Naive thymus-derived CD8-positive, alpha-beta T cell (primary cell): ENCODE measurements at regions of chr17 and their contacts with region 1.

Region 1: DNA sequence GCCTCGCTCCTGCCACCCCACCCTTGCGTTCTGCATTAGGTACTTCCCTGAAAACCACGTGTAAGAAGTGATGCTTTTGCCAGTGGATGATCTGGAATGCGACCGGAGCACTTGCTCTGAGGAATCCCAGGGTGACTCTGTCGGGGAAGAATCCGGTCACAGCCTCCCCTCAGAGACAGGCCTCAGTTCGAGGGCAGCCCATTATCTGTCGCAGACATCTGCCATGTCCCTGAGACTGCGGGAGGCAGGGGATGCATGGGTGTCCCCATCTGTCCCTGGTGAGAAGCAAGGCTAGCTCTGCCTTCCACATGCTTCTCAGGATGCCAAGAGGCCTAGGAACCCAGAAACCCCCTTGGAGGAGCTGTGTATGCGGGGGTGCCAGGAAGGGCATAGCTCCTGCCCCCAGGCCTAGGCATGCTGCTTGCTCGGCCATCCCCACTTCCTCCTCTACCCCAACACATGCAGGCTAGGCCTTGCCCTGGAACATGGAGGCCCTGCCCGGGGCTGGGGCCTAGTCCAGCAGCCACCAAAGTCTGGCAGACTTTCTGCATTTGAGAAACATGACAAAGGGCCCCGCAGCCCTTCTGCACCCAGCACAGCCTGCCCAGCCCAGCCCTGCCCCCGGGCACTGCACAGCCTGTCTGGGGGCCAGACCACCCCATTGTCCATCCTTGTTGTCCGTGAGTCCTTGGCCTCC is 20.5 kb downstream of the MNT start:
- DNase-seq: no peak
- ATAC-seq: no peak
- H3K4me3 Mint-ChIP-seq: no peak overlapping the region
- H3K27ac Mint-ChIP-seq: no peak overlapping the region
- H3K4me1 Mint-ChIP-seq: peaks cover 0 to 4% (median 2%) of the 10 kb centered on the region in 4 donors
- H3K27me3 Mint-ChIP-seq: no peaks in the 10 kb centered on the region

Region 2: DNA sequence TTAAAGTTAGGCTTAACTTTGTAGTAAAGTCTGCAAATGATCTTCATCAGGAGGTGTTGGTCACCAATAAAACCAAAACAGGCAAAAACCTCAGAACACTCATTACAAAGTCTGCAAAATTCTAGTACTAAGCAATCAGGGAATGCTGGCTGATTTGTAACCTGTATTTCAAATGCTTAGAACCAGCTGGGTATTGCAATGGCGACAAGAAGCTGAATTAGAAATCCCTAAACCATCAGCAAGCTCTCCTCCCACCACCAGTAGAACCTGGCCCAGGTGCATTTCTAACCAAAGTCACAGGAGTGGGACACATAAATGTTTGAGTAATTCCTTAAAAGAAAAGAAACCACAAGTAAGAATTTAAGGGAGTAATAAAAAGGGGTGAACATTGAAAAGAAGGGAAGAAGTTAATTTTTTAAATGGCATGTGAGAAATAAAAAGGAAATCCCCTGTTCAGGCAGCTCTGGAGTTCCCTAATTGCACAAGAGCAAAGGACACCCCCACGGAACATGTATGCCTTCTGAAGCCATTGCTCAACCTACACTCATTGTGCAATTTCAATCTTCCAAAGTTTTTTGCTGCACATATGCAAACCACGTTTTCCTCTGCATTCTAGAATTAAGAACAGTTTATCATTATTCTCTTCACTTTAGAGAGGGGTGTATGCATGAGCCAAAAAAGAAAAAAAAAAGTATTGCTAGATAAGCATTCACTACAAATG is 222.5 kb before region 1 on chr17:
- POLR2A ChIA-PET with region 1: no interaction called
- DNase-seq: no peak
- ATAC-seq: no peak
- H3K4me3 Mint-ChIP-seq: no peak overlapping the region
- H3K27ac Mint-ChIP-seq: peak overlapping the region in 1 of 10 donors; percentile 29
- H3K4me1 Mint-ChIP-seq: peaks cover 0 to 31% (median 2%) of the 10 kb centered on the region in 4 donors
- H3K27me3 Mint-ChIP-seq: no peaks in the 10 kb centered on the region

Region 3: GRCh38 chr17:2361010-2361760 is 19.2 kb before region 1 on chr17:
- POLR2A ChIA-PET with region 1: no interaction called
- DNase-seq: no peak
- ATAC-seq: no peak
- H3K4me3 Mint-ChIP-seq: no peak overlapping the region
- H3K27ac Mint-ChIP-seq: peak overlapping the region in 6 of 10 donors; percentile 16 to 69 (median 38)
- H3K4me1 Mint-ChIP-seq: no peaks in the 10 kb centered on the region
- H3K27me3 Mint-ChIP-seq: no peaks in the 10 kb centered on the region

Region 4: DNA sequence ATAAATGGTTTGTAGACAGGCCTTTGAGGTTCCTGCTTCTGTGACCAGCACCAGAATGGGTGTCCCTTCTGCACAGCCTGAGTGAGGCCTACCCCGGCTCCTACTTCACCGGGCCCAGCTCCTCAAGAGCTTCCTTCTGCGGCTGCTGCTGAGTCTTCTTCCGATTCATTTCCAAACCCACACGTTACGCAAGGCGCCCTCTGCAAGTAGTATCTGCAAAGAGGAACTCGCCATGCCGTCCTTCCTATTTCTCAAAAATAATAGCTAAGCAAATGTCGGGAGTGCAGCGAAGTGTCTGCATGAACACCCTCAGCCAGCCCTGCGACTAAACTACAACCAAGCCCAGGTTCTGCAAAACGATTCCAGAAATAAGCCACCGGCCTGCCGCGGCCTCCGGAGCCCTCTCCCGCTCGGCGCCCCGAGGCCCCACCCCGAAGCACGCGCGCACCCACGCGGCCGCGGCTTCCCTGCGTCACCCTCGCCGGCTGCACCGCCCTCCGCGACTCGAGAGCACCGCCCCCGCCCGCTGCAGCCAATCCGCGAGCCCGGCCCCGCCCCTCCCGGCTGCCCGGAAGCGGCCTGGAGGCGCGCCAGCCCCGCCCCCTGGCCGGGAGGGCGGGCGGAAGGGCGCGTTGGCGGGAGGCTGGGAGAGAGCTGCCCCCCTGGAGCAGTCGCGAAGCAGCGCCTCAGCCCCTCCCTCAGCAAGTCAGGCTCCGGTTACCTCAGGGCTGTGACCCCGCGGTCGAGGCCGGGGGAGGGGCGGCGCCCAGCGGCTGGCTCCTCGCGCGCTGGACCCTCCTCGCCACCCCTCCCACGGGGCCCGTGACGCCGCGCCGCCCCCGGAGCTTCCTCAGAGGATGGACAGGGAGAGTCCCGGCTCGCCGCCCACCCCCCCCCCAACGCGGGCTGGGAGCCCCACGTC is 12.1 kb after region 1 on chr17:
- POLR2A ChIA-PET with region 1: interaction called, 27 read pairs
- DNase-seq: peak; percentile 95 to 100 (median 98)
- ATAC-seq: peak; percentile 67 to 68
- H3K4me3 Mint-ChIP-seq: peak overlapping the region; percentile 87 to 99 (median 95)
- H3K27ac Mint-ChIP-seq: peak overlapping the region; percentile 91 to 99 (median 97)
- H3K4me1 Mint-ChIP-seq: peaks cover 33 to 69% (median 58%) of the 10 kb centered on the region in 4 donors
- H3K27me3 Mint-ChIP-seq: no peaks in the 10 kb centered on the region

Region 5: GRCh38 chr17:2416010-2416734 is 35.8 kb after region 1 on chr17:
- POLR2A ChIA-PET with region 1: interaction called, 56 read pairs
- DNase-seq: peak; percentile 73 to 92 (median 82)
- ATAC-seq: peak; percentile 80 to 92
- H3K4me3 Mint-ChIP-seq: no peak overlapping the region
- H3K27ac Mint-ChIP-seq: peak overlapping the region in 8 of 10 donors; percentile 27 to 90 (median 68)
- H3K4me1 Mint-ChIP-seq: peaks cover 0 to 4% (median 1%) of the 10 kb centered on the region in 4 donors
- H3K27me3 Mint-ChIP-seq: no peaks in the 10 kb centered on the region